Activated B cell treated with CpG ODN at 0.5 μM for 24 hours (primary cell): ENCODE measurements at regions of chr1 and their contacts with region 1.

Region 1: GRCh38 chr1:157618190-157618589 is 20.3 kb upstream of the FCRL4 start:
- DNase-seq: no peak
- ATAC-seq: no peak
- H3K4me3 Mint-ChIP-seq: no peak overlapping the region
- H3K27ac Mint-ChIP-seq: no peak overlapping the region
- H3K4me1 Mint-ChIP-seq: no peaks in the 10 kb centered on the region
- H3K27me3 Mint-ChIP-seq: no peaks in the 10 kb centered on the region
- CTCF ChIP-seq: no peak

Region 2: DNA sequence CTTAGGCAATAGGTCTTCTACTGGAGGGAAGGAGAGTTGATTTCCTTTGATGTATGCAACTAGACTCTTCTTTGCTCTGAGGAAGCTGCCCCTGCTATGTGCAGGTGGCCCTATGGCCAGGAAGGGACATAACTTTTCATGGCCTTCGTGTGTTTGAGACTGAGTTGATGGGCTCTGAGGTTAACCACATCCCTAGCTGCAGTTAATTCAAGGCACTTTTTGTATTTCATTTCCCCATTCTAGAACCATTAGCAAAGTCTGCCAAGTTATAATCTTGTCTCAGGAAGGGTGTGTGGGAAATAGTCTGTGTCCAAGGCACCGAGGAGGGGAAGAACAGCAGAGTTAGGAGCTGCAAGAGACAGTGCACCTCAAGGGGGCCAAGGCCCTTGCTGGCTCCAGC is 22.8 kb before region 1 on chr1:
- CTCF ChIA-PET with region 1: no interaction called
- POLR2A ChIA-PET with region 1: no interaction called
- intact Hi-C with region 1: loop called (anchors 2 kb)
- DNase-seq: no peak
- ATAC-seq: peak; percentile 53
- H3K4me3 Mint-ChIP-seq: peak overlapping the region; percentile 62
- H3K27ac Mint-ChIP-seq: peak overlapping the region; percentile 30
- H3K4me1 Mint-ChIP-seq: peaks cover 71% of the 10 kb centered on the region
- H3K27me3 Mint-ChIP-seq: no peaks in the 10 kb centered on the region
- CTCF ChIP-seq: no peak